ENCODE measurements at regions of chr1 and their contacts with region 1.

Region 1: DNA sequence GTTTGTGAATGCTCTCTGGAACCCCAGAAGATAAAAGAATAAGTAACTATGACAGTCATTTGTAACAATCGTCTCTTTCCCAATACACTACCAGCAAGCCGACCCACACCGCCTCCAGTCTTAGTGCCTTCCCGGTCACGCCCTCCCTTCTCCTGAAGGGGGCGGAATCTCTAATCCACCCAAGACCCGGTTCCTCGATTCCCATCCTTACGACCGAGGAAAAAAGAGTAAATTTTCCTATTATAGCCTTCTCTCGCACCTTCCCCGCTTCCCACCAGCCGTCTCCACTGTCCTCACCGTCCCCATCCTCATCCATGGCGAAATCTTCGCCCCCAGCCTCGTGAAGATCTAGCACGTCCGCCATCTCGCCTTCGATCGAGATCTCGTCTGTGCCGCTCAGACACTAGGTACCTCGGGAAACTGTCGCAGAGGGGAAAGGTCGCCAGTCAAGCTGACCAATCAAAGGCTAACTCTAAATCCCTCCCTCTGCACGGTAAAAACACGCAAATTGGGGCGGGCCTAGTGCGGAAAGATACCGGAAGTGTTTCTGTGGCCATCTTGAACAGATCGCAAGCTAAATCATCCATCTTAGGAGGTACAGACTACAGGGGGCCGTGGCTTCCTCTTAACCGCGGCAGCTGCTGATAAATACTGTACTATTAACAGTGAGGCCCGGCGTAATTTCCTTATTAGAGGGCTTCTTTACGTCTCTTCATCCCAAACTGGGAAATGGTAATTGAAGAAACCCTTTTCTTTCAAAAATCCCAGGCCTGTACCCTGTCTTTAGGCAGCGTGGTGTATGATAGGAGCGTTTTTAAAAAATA is at the start of gene RBM8A:
- DNase-seq: peak; percentile 96
- ATAC-seq: peak; percentile 97
- H3K4me3 Mint-ChIP-seq: no peak within 1 kb of the TSS
- H3K27ac Mint-ChIP-seq: no peak within 1 kb of the TSS
- H3K4me1 Mint-ChIP-seq: peaks cover 28% of the 10 kb centered on the region
- H3K27me3 Mint-ChIP-seq: no peaks in the 10 kb centered on the region
- total RNA-seq, gene RBM8A: 293 to 330 TPM

Region 2: GRCh38 chr1:145804235-145805045 is 122.8 kb before region 1 on chr1:
- CTCF ChIA-PET with region 1: no interaction called
- POLR2A ChIA-PET with region 1: no interaction called
- intact Hi-C with region 1: no loop called
- DNase-seq: no peak
- ATAC-seq: no peak
- H3K4me3 Mint-ChIP-seq: no peak overlapping the region
- H3K27ac Mint-ChIP-seq: no peak overlapping the region
- H3K4me1 Mint-ChIP-seq: peaks cover 37% of the 10 kb centered on the region
- H3K27me3 Mint-ChIP-seq: no peaks in the 10 kb centered on the region

Region 3: DNA sequence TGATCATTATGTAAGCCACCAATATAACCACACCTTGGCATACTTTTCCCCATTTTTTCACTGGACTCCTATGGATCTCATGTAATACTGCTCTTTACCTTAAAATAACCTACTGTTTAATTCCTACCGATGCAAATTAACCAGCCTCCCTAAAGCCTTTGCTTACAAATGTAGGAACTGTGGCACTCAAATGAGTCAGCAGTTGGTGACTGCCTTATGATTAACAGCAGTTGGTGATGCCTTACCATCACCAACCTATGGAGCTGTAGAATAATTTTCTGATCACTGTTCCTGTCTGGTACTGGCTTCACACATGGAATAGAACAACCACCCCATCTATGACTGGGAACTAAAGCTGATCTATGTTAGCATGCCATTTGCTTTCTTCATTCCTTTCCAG is 89.6 kb before region 1 on chr1:
- CTCF ChIA-PET with region 1: no interaction called
- POLR2A ChIA-PET with region 1: no interaction called
- intact Hi-C with region 1: no loop called
- DNase-seq: no peak
- ATAC-seq: peak; percentile 53
- H3K4me3 Mint-ChIP-seq: no peak overlapping the region
- H3K27ac Mint-ChIP-seq: no peak overlapping the region
- H3K4me1 Mint-ChIP-seq: peaks cover 4% of the 10 kb centered on the region
- H3K27me3 Mint-ChIP-seq: no peaks in the 10 kb centered on the region

Region 4: DNA sequence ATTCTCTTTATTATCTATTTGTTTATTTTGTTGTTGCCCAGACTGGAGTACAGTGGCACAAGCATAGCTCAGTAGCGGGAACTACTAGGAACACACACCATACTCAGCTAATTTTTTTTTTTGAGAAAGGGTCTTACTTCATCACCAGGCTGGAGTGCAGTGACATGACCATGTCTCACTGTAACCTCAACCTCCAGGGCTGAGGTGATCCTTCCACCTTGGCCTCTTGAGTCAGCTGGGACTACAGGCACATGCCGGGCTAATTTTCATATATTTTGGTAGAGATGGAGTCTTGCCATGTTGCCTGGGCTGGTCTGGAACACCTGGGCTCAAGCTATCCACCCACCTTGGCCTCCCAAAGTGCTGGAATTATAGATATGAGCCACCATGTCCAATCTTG is 74.4 kb after region 1 on chr1:
- CTCF ChIA-PET with region 1: interaction called, 3 read pairs
- POLR2A ChIA-PET with region 1: interaction called, 10 read pairs
- intact Hi-C with region 1: loop called (anchors 1 to 5 kb)
- DNase-seq: peak; percentile 11
- ATAC-seq: no peak
- H3K4me3 Mint-ChIP-seq: no peak overlapping the region
- H3K27ac Mint-ChIP-seq: peak overlapping the region; percentile 78
- H3K4me1 Mint-ChIP-seq: peaks cover 76% of the 10 kb centered on the region
- H3K27me3 Mint-ChIP-seq: no peaks in the 10 kb centered on the region

Region 5: DNA sequence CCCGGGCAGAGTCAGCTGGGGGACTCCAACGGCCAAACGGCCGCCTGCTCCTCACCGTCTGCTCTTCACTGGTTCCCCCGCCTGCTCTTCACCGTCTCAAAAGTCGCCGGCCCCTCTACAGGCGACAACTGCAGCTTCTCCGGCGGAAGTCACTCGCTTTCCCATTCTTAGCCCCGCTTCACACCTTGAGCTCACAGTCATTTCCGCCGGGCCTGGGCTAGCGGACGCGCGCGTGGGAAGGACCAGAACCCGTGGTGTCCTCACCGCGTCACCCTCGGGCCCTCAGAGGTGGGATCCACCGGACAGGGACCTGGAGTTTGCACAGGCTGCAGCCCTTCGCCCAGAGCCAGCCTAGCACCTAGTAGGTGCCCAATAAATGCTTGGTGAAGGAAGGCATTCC is 122.2 kb after region 1 on chr1:
- CTCF ChIA-PET with region 1: no interaction called
- POLR2A ChIA-PET with region 1: interaction called, 16 read pairs
- intact Hi-C with region 1: no loop called
- DNase-seq: no peak
- ATAC-seq: no peak
- H3K4me3 Mint-ChIP-seq: no peak overlapping the region
- H3K27ac Mint-ChIP-seq: no peak overlapping the region
- H3K4me1 Mint-ChIP-seq: peaks cover 26% of the 10 kb centered on the region
- H3K27me3 Mint-ChIP-seq: no peaks in the 10 kb centered on the region

Measured in activated CD4-positive, alpha-beta T cell treated with anti-CD3 and anti-CD28 coated beads for 36 hours (primary cell).